Brain microvascular endothelial cell (primary cell): ENCODE measurements at regions of chr16 and their contacts with region 1.

Region 1: GRCh38 chr16:86519649-86520316 is 9.5 kb downstream of the FOXF1 start:
- DNase-seq: peak; percentile 35
- H3K4me3 ChIP-seq: no peak overlapping the region
- H3K27ac ChIP-seq: no peak overlapping the region
- H3K27me3 ChIP-seq: peaks cover 31% of the 10 kb centered on the region
- CTCF ChIP-seq: peak; percentile 95

Region 2: DNA sequence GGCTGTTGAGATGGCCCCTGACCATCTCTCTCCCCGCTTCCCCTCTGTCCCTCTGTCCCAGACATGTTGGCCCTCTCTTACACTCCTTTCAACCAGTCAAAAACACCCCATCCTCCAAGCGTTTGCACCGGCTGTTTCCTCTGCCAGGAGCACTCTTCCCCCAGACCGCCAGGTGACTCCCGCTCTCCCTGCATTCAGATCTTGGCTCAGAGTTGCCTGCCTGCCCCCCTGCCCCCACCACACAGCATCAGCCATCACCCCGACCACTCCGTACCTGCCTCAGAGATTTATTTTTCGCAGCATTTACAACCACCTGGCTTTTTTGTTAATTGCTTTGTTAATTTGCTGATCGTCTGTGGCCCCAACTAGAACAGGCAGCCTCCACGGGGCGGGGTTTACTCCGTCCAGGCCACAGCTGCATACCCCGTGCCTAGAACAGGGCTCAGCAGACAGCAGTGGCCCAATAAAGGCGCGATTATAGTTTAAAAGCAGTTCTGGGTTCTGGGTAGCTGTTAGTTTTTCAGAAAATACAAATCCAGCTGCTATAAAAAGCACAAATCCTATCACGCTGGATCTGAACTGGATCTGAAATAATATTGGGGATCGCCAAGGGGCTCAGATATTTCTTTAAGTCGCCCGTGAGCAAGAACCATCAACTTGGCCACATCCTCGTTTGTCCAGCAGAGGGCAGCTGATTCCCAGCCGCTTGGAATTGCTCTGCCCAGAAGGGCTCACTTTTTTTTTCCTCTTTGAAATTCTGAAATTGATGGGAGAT is 447.3 kb before region 1 on chr16:
- in situ Hi-C with region 1: loop called (anchors 10 kb)
- DNase-seq: peak; percentile 65
- H3K4me3 ChIP-seq: no peak overlapping the region
- H3K27ac ChIP-seq: no peak overlapping the region
- H3K27me3 ChIP-seq: no peaks in the 10 kb centered on the region
- CTCF ChIP-seq: peak; percentile 95

Region 3: DNA sequence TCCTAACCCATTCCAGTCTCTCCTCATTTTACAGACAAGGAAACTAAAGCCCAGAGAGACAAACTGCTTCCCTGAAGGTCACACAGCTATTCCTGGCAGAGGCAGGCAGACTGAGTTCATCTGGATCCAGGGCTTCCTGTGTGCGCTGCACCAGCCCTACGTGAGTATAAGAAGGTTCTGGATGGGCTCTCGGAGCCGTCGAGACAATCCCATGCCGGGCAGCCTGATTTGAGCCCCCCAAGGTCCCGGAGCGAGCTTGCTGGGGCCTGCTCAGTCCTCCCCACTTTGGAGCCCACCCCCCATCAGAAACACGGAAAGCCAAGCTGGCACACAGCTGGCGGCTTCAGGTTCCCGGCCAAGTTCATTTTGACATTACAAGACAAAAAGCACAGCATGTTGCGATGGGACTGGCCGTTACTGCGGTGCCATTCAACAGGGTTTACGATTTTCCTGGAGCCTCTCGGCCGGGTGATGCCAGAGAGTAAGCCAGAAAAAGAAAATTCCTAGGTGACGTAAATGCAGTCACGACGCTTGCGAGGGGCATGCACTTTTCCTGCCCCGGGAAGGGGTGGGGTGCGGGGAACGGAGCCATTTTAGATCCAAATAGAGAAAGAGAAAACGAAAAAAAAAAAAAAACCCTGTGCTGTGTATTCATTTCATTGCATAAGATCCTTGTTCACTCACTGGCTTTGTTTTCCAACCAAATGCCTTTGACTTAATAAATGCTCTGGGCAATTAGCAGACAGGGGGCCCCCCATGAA is 176.6 kb before region 1 on chr16:
- in situ Hi-C with region 1: loop called (anchors 25 kb)
- DNase-seq: peak; percentile 29
- H3K4me3 ChIP-seq: no peak overlapping the region
- H3K27ac ChIP-seq: no peak overlapping the region
- H3K27me3 ChIP-seq: no peaks in the 10 kb centered on the region
- CTCF ChIP-seq: no peak